ENCODE measurements at regions of chr21 and their contacts with region 1.

Region 1: DNA sequence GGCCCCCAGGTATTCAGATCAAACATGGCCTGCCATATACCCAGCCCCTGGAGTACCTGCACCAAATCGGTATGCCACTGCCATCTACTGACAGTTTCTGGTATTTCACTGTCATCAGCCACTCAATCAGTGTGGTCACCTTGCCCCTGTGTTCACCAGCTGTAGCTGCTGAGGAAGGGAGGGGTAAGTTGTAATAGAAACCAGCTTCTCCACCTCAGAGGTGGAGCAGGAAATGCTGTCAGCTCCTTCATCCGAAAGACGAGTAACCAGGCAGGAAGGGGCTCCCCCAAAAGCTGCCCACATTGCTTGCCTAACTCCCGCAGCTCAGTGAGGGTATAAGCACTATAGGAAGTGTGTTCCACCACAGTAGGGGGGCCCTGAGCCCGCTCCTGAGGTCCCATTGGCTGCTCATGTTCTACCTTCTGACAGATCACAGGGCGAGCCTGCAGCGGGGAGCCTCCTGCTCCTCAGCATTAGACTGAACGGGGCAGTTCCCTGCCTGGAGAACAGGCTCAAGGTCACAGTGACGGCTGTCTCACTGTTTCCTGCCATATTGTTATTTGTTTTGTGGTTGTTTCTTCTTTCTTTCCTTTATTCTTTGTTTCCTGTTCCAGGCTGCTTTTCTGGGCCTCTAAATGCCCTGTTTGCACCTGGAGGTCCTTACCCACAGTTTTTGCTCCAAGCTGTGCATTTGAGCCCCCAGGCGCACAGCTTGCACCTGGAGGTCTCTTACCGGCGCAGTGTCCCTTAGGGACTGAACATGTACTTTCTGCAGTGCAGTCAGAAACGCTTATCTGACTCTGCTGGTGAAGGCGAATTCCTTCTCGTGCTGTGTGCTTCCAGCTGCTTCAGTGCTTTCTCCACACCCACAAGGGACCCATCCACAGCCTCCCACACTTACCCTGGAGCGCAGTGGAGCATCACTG is 1638.3 kb downstream of the MRPL39 start:
- H3K4me3 Mint-ChIP-seq: no peak overlapping the region
- H3K27ac Mint-ChIP-seq: no peak overlapping the region
- H3K4me1 Mint-ChIP-seq: peaks cover 10% of the 10 kb centered on the region
- H3K27me3 Mint-ChIP-seq: peaks cover 59% of the 10 kb centered on the region

Region 2: DNA sequence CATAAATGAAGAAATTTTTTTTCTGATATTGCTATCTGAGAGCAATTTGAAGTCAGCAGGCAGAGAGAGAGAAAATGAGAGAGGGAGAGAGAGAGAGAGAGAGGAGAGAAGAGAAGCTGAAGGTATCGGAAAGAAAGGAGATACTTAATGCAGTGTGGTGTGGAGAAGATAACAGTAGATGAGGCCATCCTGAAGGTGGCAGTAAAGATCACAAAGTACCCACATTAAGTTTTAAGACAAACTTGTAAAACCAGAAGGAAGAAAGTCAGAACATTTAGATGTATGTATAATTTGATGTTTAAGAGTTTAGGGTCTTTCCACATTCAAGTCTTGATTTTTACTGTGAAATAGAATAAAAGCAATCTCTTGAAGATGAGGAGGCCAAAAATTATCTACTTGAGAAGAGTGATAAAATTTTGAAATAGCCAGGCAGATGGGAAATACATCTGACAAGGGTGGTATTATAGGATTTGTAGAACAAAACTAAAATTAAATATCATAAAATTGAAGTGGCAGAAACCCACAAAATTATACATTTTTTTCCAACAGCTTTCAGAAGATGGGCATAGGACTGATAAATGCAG is 115.1 kb before region 1 on chr21:
- intact Hi-C with region 1: loop called (anchors 2 kb)
- H3K4me3 Mint-ChIP-seq: no peak overlapping the region
- H3K27ac Mint-ChIP-seq: no peak overlapping the region
- H3K4me1 Mint-ChIP-seq: no peaks in the 10 kb centered on the region
- H3K27me3 Mint-ChIP-seq: no peaks in the 10 kb centered on the region

Region 3: GRCh38 chr21:24276204-24276603 is 307.2 kb after region 1 on chr21:
- intact Hi-C with region 1: no loop called
- H3K4me3 Mint-ChIP-seq: no peak overlapping the region
- H3K27ac Mint-ChIP-seq: no peak overlapping the region
- H3K4me1 Mint-ChIP-seq: peaks cover 6% of the 10 kb centered on the region
- H3K27me3 Mint-ChIP-seq: no peaks in the 10 kb centered on the region